AG04449 (cell line): ENCODE measurements at regions of chr11 and their contacts with region 1.

Region 1: DNA sequence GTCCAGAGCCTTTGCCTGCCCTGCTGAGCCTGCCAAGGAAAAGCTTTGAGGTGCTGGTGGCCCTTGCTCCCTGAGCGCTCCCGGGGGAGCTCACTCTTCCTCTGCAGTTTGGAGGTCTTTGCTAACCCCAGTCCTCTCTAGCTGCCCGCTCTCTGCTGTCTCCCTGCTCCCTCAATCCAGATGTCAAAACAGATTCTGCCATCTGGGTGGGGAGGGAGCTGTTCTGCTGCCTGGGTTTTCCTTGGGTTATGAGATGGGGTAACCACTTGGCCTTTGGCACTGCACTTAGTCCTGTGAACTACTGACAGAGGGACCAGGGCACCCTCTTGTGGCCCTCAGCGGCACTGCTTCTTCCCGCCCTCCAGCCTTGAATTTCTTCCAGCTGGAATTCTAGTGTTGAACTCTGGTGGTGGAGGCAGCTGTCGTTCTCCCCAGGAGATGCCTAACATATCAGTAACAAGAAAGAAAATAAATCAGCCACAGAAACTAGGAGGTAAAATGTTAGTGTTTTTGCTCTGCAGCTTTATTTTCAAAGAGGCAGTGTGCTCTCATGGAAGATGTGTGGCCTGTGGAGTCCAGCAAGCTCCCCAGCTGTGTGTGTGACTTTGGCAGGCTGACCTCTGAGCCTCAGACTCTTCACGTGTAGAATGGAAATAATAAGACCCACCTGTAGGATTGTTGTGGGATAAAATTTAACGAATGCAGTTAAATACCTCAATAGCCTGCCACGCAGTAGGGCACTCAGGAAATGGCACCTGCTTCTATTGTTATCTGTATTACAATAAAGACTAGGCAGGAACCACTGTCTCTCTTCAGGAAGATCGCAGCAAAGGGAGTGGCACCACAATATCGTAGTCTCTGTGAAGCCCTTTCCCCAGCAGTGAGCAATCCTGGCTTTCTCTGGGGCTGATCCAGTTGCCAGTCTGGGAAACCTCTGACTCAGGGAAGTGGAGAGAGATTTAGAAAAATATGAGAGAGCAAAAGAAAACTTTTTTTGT is 23.4 kb downstream of the ARFGAP2 start:
- DNase-seq: no peak
- H3K4me3 ChIP-seq: no peak overlapping the region
- CTCF ChIP-seq: peak; percentile 94

Region 2: GRCh38 chr11:46889689-46890475 is 263.4 kb before region 1 on chr11:
- CTCF ChIA-PET with region 1: interaction called, 181 read pairs
- POLR2A ChIA-PET with region 1: interaction called, 3 read pairs
- DNase-seq: peak; percentile 7
- H3K4me3 ChIP-seq: no peak overlapping the region
- CTCF ChIP-seq: peak; percentile 77

Region 3: GRCh38 chr11:46906609-46907041 is 246.6 kb before region 1 on chr11:
- CTCF ChIA-PET with region 1: interaction called, 22 read pairs
- POLR2A ChIA-PET with region 1: no interaction called
- DNase-seq: no peak
- H3K4me3 ChIP-seq: no peak overlapping the region
- CTCF ChIP-seq: no peak

Region 4: DNA sequence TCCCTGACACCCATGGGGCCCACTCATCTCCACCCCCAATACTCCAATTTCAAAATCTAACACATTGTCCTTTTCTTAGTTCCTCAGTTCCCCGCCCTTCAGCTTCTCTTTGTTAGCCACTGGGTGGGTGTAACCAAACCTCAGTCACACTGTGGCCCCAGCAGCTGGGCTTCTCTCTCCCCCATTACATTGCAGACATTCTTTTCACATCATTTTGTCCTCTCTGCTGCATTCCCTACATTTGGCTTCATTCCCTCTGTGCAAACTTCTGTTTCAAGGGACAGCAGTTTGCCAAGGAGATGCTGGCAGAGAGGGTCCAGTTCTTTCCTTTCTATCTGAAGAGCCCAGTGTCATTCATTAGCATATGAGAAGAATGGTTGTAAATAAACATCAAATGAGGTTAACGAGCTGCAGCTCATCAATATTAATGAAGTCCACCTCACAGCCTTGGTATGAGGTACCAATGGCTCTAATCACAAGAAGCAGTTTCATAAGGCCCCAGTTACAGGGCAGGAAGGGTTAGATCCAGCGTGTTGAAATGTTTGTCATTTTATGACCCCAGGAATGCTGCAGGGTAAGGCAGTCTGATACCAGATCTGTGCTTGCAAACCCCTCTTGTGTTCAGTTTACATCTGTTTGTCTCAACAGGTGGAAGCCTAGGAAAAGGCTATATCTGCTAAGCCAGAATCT is 48.8 kb before region 1 on chr11:
- CTCF ChIA-PET with region 1: interaction called, 12 read pairs
- POLR2A ChIA-PET with region 1: no interaction called
- DNase-seq: peak; percentile 16
- H3K4me3 ChIP-seq: no peak overlapping the region
- CTCF ChIP-seq: no peak

Region 5: DNA sequence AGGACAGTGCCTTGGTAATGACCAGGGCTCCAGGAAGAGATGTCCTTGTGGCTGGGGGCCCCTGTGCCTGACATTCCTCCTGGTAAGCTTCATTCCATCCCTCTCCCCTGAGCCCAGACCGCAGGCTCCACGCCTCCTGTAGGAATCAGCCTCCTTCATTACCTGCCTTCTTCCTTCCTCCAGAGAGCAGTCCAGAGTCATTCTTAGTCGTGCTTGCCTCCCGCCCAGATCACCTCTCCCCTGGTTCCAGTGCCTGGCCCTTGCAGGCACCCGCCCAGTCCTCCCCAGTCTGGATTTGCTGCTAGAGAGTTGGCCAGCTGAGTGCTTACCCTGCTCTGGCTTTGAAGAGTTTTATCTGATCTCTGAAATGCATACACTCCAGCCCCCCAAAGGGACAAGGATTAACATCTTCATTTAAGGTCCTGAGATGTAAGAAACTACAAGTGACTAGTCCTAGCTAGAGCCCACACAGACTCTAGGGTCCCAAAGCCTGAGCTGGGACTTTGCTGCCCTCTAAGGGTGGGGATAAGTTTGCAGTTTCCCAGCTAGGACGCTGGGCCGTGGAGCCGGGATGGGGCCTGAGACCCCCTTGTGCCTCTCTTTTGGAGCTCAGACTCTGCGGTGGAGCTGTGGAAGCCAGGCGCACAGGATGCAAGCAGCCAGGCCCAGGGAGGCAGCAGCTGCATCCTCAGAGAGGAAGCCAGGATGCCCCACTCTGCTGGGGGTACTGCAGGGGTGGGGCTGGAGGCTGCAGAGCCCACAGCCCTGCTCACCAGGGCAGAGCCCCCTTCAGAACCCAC is 106.1 kb after region 1 on chr11:
- CTCF ChIA-PET with region 1: interaction called, 20 read pairs
- POLR2A ChIA-PET with region 1: no interaction called
- DNase-seq: no peak
- H3K4me3 ChIP-seq: no peak overlapping the region
- CTCF ChIP-seq: peak; percentile 65

Region 6: DNA sequence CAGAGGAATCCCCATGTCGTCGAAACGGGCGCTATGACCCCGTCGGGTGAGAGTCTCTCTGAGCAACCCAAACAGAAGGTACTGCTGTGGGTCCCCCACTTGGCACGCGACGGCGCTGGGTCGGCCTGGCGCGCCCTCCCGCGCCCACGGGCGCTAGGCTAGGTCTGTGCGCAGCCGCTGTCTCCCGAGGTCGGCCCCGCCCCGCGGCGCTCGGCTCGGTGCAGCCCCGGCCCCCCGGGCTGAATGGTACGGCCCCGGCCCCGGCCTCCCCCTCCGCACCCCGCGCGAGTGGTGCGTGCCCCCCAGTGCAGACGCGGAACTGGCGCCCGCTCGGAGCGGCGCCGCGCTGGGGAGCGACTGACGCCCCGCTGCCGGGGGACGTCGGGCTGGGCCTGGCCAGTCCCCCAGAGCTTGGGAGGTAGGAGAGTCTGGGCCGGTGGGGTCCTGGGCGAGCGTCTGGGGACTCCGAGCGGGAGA is 116.6 kb after region 1 on chr11 and contains the start of gene MADD:
- CTCF ChIA-PET with region 1: no interaction called
- POLR2A ChIA-PET with region 1: no interaction called
- DNase-seq: no peak
- H3K4me3 ChIP-seq: peak within 1 kb of the TSS; percentile 75
- CTCF ChIP-seq: no peak